ENCODE measurements at regions of chr19 and their contacts with region 1.

Region 1: GRCh38 chr19:45340232-45340898 is at the start of gene KLC3:
- DNase-seq: no peak
- ATAC-seq: no peak
- H3K4me3 ChIP-seq: no peak within 1 kb of the TSS
- H3K27ac ChIP-seq: no peak within 1 kb of the TSS
- H3K4me1 ChIP-seq: no peaks in the 10 kb centered on the region
- H3K27me3 ChIP-seq: peaks cover 17% of the 10 kb centered on the region
- CTCF ChIP-seq: no peak
- POLR2A ChIP-seq: no peak
- RAD21 ChIP-seq: no peak
- total RNA-seq, gene KLC3: under 0.01 and 0.18 TPM in 2 replicates

Region 2: DNA sequence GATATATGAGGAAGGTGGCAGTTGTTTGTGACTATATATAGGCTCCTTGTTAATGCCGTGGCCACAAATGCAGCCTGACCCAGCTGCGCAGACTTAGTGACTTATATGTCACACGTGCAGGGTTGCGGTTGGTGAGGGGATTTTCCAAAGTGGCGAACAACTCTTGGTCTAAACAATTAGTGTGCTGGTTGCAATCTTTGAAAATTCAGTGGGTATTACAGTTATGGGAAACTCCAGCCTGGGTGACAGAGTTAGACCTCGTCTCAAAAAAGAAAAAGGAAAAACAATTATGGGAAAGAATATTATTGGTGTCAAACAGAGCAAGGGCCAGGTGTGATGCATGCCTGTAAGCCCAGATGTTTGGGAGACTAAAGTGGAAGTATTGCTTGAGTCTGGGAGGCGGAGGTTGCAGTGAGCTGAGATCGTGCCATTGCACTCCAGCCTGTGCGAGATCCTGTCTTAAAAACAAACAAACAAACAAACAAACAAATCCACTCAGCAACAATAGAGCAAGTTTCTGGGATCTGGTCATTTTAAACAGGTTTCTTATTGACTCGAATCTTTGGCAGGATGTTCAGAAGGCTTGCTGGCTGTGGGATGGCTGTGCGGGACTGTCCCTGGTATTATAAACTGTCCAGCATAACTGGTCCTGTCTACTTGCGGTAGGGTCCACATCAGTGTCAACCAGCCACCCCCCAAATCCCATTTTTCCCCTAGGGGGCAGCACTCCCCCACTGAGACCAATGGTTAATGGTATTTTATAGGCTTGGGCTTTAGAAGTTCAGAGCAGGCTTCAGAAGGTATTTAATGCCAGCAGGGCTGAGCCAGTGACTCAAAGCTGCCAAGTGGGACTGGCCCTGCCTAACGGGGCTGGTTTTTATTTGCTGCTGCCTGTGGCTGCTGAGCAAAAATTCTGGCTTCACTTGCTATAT is 323.7 kb before region 1 on chr19:
- CTCF ChIA-PET with region 1: no interaction called
- POLR2A ChIA-PET with region 1: no interaction called
- dilution Hi-C with region 1: no loop called
- in situ Hi-C with region 1: no loop called
- intact Hi-C with region 1: loop called (anchors 1 kb)
- DNase-seq: peak; percentile 63
- ATAC-seq: peak; percentile 96
- H3K4me3 ChIP-seq: no peak overlapping the region
- H3K27ac ChIP-seq: no peak overlapping the region
- H3K4me1 ChIP-seq: no peaks in the 10 kb centered on the region
- H3K27me3 ChIP-seq: no peaks in the 10 kb centered on the region
- CTCF ChIP-seq: peak; percentile 63
- POLR2A ChIP-seq: no peak
- RAD21 ChIP-seq: peak; percentile 59

Region 3: GRCh38 chr19:45161738-45162607 is 178.4 kb before region 1 on chr19:
- CTCF ChIA-PET with region 1: no interaction called
- POLR2A ChIA-PET with region 1: no interaction called
- dilution Hi-C with region 1: no loop called
- in situ Hi-C with region 1: no loop called
- intact Hi-C with region 1: loop called (anchors 1 kb)
- DNase-seq: peak; percentile 28
- ATAC-seq: peak; percentile 84
- H3K4me3 ChIP-seq: no peak overlapping the region
- H3K27ac ChIP-seq: no peak overlapping the region
- H3K4me1 ChIP-seq: peaks cover 2% of the 10 kb centered on the region; the same call in 1 of the 2 replicates
- H3K27me3 ChIP-seq: peaks cover 22% of the 10 kb centered on the region
- CTCF ChIP-seq: peak; percentile 64
- POLR2A ChIP-seq: no peak
- RAD21 ChIP-seq: peak; percentile 67

Measured in IMR-90 (cell line).